ENCODE measurements at regions of chr6 and their contacts with region 1.

Region 1: DNA sequence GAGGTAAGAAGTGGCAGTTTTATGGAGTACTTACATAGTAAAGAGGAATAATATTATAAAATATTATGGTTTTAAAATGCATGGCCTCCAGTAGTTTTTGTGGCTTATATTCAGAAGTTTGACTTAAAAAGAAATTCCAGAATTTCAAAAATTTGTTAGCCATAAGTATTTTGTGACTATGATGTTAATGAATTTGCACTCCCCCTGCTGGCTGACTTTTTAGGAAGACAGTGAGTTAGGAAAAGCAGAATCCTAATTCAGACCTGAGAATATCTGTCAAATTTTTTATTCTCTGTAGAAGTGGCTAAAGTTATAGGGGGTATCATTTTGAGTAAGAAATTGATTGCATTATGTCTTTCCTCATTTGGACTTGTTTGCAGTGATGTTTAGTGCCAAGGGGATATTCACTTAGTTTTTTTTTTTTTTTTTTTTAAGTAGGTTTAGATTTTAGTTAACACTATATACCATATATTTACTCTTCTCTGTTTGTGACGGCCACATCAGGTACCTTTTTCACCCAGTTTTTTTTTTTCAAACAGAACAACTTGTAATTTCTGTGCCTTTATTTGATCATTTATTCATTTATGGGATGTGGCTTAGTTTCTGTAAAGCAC is 40.8 kb downstream of the ZFAND3 start:
- DNase-seq: no peak
- H3K4me3 ChIP-seq: no peak overlapping the region
- CTCF ChIP-seq: peak; percentile 48

Region 2: GRCh38 chr6:37845026-37845911 is 15.1 kb before region 1 on chr6:
- CTCF ChIA-PET with region 1: interaction called, 41 read pairs
- POLR2A ChIA-PET with region 1: no interaction called
- DNase-seq: no peak
- H3K4me3 ChIP-seq: no peak overlapping the region
- CTCF ChIP-seq: no peak

Region 3: GRCh38 chr6:37871616-37872370 is 11.5 kb after region 1 on chr6:
- CTCF ChIA-PET with region 1: interaction called, 11 read pairs
- POLR2A ChIA-PET with region 1: no interaction called
- DNase-seq: no peak
- H3K4me3 ChIP-seq: no peak overlapping the region
- CTCF ChIP-seq: no peak